Activated CD8-positive, alpha-beta T cell treated with anti-CD3 and anti-CD28 coated beads for 36 hours (primary cell): ENCODE measurements at regions of chr15 and their contacts with region 1.

Region 1: GRCh38 chr15:85044251-85044853 is 62.7 kb downstream of the PDE8A start:
- DNase-seq: peak; percentile 64
- ATAC-seq: peak; percentile 47
- H3K4me3 Mint-ChIP-seq: no peak overlapping the region
- H3K27ac Mint-ChIP-seq: no peak overlapping the region
- H3K4me1 Mint-ChIP-seq: peaks cover 18% of the 10 kb centered on the region
- H3K27me3 Mint-ChIP-seq: no peaks in the 10 kb centered on the region
- CTCF ChIP-seq: peak; percentile 49

Region 2: GRCh38 chr15:84992157-84992944 is 52.0 kb before region 1 on chr15:
- CTCF ChIA-PET with region 1: interaction called, 14 read pairs
- POLR2A ChIA-PET with region 1: no interaction called
- intact Hi-C with region 1: no loop called
- DNase-seq: peak; percentile 76
- ATAC-seq: peak; percentile 89
- H3K4me3 Mint-ChIP-seq: no peak overlapping the region
- H3K27ac Mint-ChIP-seq: peak overlapping the region; percentile 21
- H3K4me1 Mint-ChIP-seq: peaks cover 48% of the 10 kb centered on the region
- H3K27me3 Mint-ChIP-seq: no peaks in the 10 kb centered on the region
- CTCF ChIP-seq: no peak

Region 3: DNA sequence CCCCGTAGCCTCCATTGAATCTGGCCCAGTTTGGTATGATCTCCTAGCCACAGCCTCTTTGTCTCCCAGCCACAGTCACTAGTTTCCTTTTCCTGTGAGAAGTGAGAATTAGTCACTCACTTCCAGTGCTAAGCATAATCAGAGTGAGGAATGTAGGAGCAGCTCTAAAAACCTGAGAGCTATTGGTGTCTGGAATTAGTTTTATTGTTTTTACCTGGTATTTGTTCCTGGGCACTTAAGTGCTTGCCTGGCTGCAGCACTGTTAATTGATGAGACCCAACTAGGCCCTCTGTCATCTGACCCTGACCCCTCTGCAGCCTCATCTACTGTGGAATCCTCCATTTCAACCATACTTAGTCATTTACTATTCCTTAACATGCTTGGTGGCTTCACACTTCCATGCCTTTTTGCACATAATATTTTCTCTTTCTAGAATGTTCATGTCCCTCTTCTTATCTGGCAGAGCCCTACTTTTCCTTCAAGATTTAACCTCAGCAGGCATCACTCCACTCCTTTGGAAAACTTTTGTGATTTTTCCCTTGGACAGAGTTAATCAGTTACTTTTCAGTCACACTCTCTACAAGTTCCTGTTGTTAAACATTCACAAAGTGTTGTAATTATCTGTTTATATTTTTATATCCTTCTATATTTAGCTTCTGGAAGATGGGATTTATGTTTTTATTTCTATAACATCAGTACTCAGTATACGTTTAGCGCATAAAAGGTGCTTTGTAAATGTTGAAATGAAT is 13.9 kb before region 1 on chr15:
- CTCF ChIA-PET with region 1: interaction called, 18 read pairs
- POLR2A ChIA-PET with region 1: no interaction called
- intact Hi-C with region 1: no loop called
- DNase-seq: peak; percentile 19
- ATAC-seq: peak; percentile 70
- H3K4me3 Mint-ChIP-seq: no peak overlapping the region
- H3K27ac Mint-ChIP-seq: peak overlapping the region; percentile 62
- H3K4me1 Mint-ChIP-seq: peaks cover 48% of the 10 kb centered on the region
- H3K27me3 Mint-ChIP-seq: no peaks in the 10 kb centered on the region
- CTCF ChIP-seq: no peak